ENCODE measurements at regions of chr10 and their contacts with region 1.

Region 1: DNA sequence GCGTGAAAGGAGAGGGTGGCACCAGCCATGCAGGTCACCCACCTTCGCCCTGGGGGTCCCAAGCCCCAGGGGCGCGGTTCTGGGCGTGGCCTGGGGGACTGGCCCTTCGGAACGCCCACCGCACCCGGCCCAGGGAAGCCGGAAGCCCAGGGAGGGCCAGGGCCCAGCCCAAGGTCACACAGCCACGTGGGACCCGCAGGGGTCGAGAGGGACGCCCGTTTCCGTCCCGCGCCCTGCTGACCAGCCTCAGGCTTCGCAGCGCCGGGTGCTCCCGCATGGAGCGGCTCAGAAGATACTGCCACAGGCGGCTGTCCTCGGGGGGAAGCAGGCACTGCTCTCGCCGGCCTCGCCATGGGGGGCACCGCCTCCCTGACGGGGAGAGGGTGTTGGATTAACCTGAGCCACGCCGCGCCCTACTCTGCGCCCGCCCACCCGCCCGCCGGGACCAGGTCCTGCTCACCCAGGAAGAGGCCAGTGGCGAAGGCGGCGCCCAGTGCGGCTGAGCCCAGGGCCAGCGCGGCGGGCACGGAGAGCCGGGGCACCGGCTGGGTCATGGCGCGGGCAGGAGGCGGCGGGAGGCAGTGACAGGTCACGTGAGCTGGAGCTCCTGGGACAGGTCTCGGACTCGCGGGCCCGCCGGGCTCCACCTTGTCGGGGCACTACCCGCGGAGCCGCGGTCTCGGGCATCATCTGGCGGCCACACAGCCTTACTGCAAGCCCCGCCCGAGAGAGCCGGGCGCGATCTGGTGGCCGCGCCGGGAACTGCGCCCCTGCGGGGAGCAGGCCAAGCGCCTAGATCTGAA is at the start of gene COMTD1:
- DNase-seq: peak; percentile 97
- ATAC-seq: peak; percentile 46
- H3K4me3 Mint-ChIP-seq: peak within 1 kb of the TSS; percentile 66
- H3K27ac Mint-ChIP-seq: no peak within 1 kb of the TSS
- H3K4me1 Mint-ChIP-seq: peaks cover 22% of the 10 kb centered on the region
- H3K27me3 Mint-ChIP-seq: no peaks in the 10 kb centered on the region; the same call in 1 of the 2 replicates
- CTCF ChIP-seq: peak; percentile 100
- total RNA-seq, gene COMTD1: 46.3 to 49.5 TPM (median 47.8 TPM) in 3 replicates

Region 2: GRCh38 chr10:74816824-74817498 is 418.6 kb before region 1 on chr10:
- CTCF ChIA-PET with region 1: no interaction called
- POLR2A ChIA-PET with region 1: no interaction called
- DNase-seq: no peak
- ATAC-seq: no peak
- H3K4me3 Mint-ChIP-seq: no peak overlapping the region
- H3K27ac Mint-ChIP-seq: no peak overlapping the region
- H3K4me1 Mint-ChIP-seq: peaks cover 12% of the 10 kb centered on the region
- H3K27me3 Mint-ChIP-seq: peaks cover 5% of the 10 kb centered on the region
- CTCF ChIP-seq: no peak

Region 3: DNA sequence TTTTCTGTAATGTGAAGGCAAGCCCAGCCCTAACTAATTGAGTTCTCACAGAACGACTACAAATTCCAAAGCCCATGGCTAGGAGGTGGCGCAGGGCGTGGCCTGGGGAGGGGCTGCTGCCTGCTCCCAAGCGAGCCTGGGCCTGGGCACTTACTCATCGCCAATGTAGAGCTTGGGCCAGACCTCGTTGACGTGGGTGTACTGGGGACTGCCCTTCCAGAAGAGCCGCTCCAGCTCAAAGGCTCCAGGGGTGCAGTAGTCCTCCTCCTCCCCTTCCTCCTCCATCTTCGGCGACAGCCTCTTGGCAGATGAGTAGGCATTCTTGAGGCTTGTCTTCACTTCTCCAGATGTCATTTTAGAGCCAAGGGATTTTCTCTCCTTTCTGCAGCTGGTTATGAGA is 177.4 kb before region 1 on chr10:
- CTCF ChIA-PET with region 1: no interaction called
- POLR2A ChIA-PET with region 1: no interaction called
- DNase-seq: no peak
- ATAC-seq: peak; percentile 25
- H3K4me3 Mint-ChIP-seq: peak overlapping the region; percentile 47
- H3K27ac Mint-ChIP-seq: no peak overlapping the region
- H3K4me1 Mint-ChIP-seq: no peaks in the 10 kb centered on the region; the same call in 1 of the 2 replicates
- H3K27me3 Mint-ChIP-seq: no peaks in the 10 kb centered on the region; the same call in 1 of the 2 replicates
- CTCF ChIP-seq: no peak

Region 4: DNA sequence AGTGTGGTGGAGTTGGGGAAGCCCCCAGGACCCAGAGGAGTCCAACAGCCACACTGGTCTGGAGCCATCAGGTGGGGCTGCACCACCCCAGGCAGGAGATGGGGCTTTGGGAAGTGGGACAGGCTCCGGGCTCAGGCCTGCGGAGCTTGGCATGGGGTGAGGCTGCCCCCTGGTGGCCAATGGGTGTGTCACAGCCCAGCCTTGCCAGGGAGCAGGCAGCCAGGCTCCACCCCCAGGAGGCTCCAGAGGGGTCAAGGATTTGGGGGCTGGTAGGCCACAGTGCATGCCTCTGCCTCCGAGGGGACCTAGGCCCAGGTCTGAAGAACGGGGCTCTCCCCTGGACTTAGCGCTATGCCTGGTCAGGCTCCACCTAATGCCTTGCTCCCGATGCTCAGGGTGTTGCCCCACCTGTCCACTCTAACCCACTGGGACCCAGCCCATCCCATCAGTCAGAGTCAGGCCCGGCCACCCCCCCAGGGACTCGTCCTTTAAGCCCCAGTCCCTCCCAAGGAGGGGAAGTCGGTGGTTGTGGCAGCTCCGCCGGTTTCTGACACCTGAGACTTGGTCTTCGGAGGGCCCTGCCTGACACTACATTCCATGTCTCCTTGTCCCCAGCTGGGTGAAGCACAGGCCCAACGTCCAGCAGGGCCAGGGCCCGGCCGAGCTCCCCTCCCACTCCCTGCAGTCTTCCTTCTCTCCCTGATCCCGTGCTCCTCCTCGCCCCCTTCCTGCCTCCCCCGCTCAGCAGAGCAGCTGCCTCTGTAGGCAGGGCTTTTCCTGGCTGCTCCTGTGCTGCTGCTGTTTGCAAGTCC is 135.4 kb before region 1 on chr10:
- CTCF ChIA-PET with region 1: interaction called, 40 read pairs
- POLR2A ChIA-PET with region 1: no interaction called
- DNase-seq: peak; percentile 96
- ATAC-seq: peak; percentile 89
- H3K4me3 Mint-ChIP-seq: peak overlapping the region; percentile 43
- H3K27ac Mint-ChIP-seq: peak overlapping the region; percentile 83; the same call in 1 of the 2 replicates
- H3K4me1 Mint-ChIP-seq: peaks cover 24% of the 10 kb centered on the region
- H3K27me3 Mint-ChIP-seq: no peaks in the 10 kb centered on the region; the same call in 1 of the 2 replicates
- CTCF ChIP-seq: peak; percentile 96

Region 5: GRCh38 chr10:75187961-75188426 is 47.6 kb before region 1 on chr10:
- CTCF ChIA-PET with region 1: interaction called, 145 read pairs
- POLR2A ChIA-PET with region 1: interaction called, 3 read pairs
- DNase-seq: peak; percentile 58
- ATAC-seq: peak; percentile 91
- H3K4me3 Mint-ChIP-seq: no peak overlapping the region
- H3K27ac Mint-ChIP-seq: peak overlapping the region; percentile 92
- H3K4me1 Mint-ChIP-seq: peaks cover 38% of the 10 kb centered on the region
- H3K27me3 Mint-ChIP-seq: no peaks in the 10 kb centered on the region
- CTCF ChIP-seq: peak; percentile 28; the same call in 1 of the 2 replicates

Region 6: GRCh38 chr10:75210282-75211006 is 25.1 kb before region 1 on chr10 and contains the start of gene VDAC2:
- CTCF ChIA-PET with region 1: interaction called, 39 read pairs
- POLR2A ChIA-PET with region 1: interaction called, 19 read pairs
- DNase-seq: peak; percentile 83
- ATAC-seq: peak; percentile 80
- H3K4me3 Mint-ChIP-seq: peak within 1 kb of the TSS; percentile 97
- H3K27ac Mint-ChIP-seq: peak within 1 kb of the TSS; percentile 98
- H3K4me1 Mint-ChIP-seq: peaks cover 42% of the 10 kb centered on the region
- H3K27me3 Mint-ChIP-seq: no peaks in the 10 kb centered on the region
- CTCF ChIP-seq: no peak
- total RNA-seq, gene VDAC2: 283 to 284 TPM (median 283 TPM) in 3 replicates

Measured in WTC11 (cell line).